ENCODE measurements at regions of chr12 and their contacts with region 1.

Region 1: DNA sequence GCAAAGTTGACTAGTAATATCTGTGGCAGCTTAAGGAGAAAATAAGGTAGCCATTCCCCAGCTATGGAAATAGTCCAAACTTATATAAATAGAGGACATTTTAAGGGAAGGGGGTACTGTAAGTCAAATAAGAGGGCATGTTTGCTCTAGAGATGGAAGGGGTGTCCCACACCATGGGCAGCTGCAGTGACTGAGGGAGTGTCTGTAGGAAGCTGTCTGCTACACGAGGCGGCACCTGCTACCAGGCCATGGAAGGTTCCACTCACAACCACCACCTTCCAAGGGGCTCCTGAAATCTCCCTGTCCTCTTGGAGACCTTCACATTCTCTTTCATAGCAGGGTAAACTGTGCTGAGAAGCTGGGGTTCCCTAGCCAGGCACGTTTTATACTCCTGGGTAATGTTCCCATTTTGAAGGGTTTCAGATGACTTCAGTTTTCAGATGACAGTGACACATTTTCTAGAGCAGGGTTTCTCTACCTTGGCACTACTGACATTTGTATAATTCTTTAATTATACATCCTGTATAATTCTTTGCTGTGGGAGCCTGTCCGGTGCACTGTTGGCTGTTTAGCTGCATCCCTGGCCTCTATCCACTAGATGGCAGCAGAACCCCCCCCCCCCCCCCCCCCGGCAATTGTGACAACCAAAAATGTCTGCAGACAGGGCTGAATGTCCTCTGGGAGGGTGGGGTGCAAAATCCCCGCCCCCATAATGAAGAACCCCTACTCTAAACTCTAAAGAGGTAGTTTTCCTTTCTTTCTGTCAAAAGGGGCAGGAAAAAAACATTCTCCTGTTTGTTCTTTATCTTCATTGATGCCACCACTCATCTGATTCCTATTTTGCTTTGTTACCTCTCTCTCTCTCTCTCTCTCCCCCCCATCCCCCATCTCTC is 11.6 kb upstream of the SMCO2 start:
- DNase-seq: no peak
- ATAC-seq: peak; percentile 74
- H3K4me3 ChIP-seq: no peak overlapping the region
- H3K27ac ChIP-seq: no peak overlapping the region
- H3K4me1 ChIP-seq: peaks cover 16% of the 10 kb centered on the region
- H3K27me3 ChIP-seq: no peaks in the 10 kb centered on the region
- CTCF ChIP-seq: peak; percentile 46 to 65 (median 51); a peak in 5 of 6 replicates
- EP300 ChIP-seq: no peak
- POLR2A ChIP-seq: no peak
- RAD21 ChIP-seq: peak; percentile 50

Region 2: DNA sequence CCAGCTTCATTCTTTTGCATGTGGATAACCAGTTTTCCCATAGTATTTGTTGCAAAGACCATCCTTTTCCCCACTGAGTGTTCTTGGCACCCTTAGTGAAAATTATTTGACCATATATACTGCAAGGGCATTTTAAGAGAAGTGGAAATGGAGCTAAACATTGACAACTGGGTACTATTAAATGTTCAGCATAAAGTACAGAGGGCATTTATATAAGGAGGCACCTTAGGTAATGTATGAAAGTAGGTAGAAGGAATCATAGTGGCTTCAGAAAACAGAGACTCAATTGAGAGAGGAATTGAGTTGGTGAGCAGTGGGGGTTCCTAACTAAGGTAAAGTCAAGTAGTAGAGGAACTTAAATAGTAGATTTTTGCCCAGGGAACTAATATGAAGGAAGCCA is 22.9 kb before region 1 on chr12:
- CTCF ChIA-PET with region 1: interaction called, 14 read pairs
- POLR2A ChIA-PET with region 1: no interaction called
- RAD21 ChIA-PET with region 1: no interaction called
- SMC1A ChIA-PET with region 1: interaction called, 5 read pairs
- in situ Hi-C with region 1: no loop called
- intact Hi-C with region 1: no loop called
- DNase-seq: no peak
- ATAC-seq: no peak
- H3K4me3 ChIP-seq: no peak overlapping the region
- H3K27ac ChIP-seq: no peak overlapping the region
- H3K4me1 ChIP-seq: no peaks in the 10 kb centered on the region
- H3K27me3 ChIP-seq: no peaks in the 10 kb centered on the region
- CTCF ChIP-seq: no peak
- EP300 ChIP-seq: no peak
- POLR2A ChIP-seq: no peak
- RAD21 ChIP-seq: no peak

Region 3: DNA sequence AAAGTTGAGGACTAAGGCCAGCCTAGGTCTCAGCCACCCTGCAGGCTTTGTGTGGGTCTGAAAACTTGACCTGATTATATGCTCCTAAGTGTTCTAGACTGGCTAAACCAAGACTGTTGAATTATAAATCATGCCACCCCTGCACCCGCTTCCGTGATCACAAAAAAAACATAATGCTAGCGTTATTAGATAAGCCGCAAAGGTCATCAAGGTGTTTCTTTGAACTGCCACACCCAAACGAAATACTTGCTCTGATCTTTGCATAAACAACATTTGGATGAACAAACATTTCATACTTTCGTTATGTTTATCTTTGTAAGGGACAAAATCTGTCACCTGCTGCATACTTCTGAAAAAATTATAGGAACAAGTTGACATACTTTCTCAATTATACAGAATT is 14.1 kb after region 1 on chr12:
- CTCF ChIA-PET with region 1: interaction called, 10 read pairs
- POLR2A ChIA-PET with region 1: no interaction called
- RAD21 ChIA-PET with region 1: no interaction called
- SMC1A ChIA-PET with region 1: no interaction called
- in situ Hi-C with region 1: no loop called
- intact Hi-C with region 1: no loop called
- DNase-seq: no peak
- ATAC-seq: no peak
- H3K4me3 ChIP-seq: no peak overlapping the region
- H3K27ac ChIP-seq: no peak overlapping the region
- H3K4me1 ChIP-seq: no peaks in the 10 kb centered on the region
- H3K27me3 ChIP-seq: no peaks in the 10 kb centered on the region; a peak in 1 of 4 replicates
- CTCF ChIP-seq: no peak
- EP300 ChIP-seq: no peak
- POLR2A ChIP-seq: no peak
- RAD21 ChIP-seq: no peak

Region 4: GRCh38 chr12:27498149-27498548 is 63.2 kb after region 1 on chr12:
- CTCF ChIA-PET with region 1: no interaction called
- POLR2A ChIA-PET with region 1: no interaction called
- RAD21 ChIA-PET with region 1: no interaction called
- SMC1A ChIA-PET with region 1: no interaction called
- in situ Hi-C with region 1: no loop called
- intact Hi-C with region 1: no loop called
- DNase-seq: peak; percentile 28
- ATAC-seq: peak; percentile 94
- H3K4me3 ChIP-seq: no peak overlapping the region
- H3K27ac ChIP-seq: no peak overlapping the region
- H3K4me1 ChIP-seq: no peaks in the 10 kb centered on the region
- H3K27me3 ChIP-seq: no peaks in the 10 kb centered on the region; a peak in 1 of 4 replicates
- CTCF ChIP-seq: no peak
- EP300 ChIP-seq: no peak
- POLR2A ChIP-seq: no peak
- RAD21 ChIP-seq: 0 out of 2 replicates have a peak, but pooled peaks have one; percentile 1

Region 5: GRCh38 chr12:27534060-27534764 is 99.3 kb after region 1 on chr12:
- CTCF ChIA-PET with region 1: interaction called, 10 read pairs
- POLR2A ChIA-PET with region 1: no interaction called
- RAD21 ChIA-PET with region 1: no interaction called
- SMC1A ChIA-PET with region 1: no interaction called
- in situ Hi-C with region 1: no loop called
- intact Hi-C with region 1: no loop called
- DNase-seq: peak; percentile 86
- ATAC-seq: peak; percentile 77
- H3K4me3 ChIP-seq: peak overlapping the region; percentile 27; the same call in 1 of the 2 replicates
- H3K27ac ChIP-seq: peak overlapping the region; percentile 78
- H3K4me1 ChIP-seq: peaks cover 62% of the 10 kb centered on the region
- H3K27me3 ChIP-seq: no peaks in the 10 kb centered on the region
- CTCF ChIP-seq: no peak
- EP300 ChIP-seq: no peak
- POLR2A ChIP-seq: no peak
- RAD21 ChIP-seq: peak; percentile 9; the same call in 1 of the 2 replicates

Region 6: GRCh38 chr12:27652174-27652763 is 217.3 kb after region 1 on chr12:
- CTCF ChIA-PET with region 1: interaction called, 23 read pairs
- POLR2A ChIA-PET with region 1: no interaction called
- RAD21 ChIA-PET with region 1: interaction called, 10 read pairs
- SMC1A ChIA-PET with region 1: interaction called, 16 read pairs
- in situ Hi-C with region 1: loop called (anchors 25 kb)
- intact Hi-C with region 1: loop called (anchors 1 kb)
- DNase-seq: peak; percentile 8
- ATAC-seq: peak; percentile 71
- H3K4me3 ChIP-seq: no peak overlapping the region
- H3K27ac ChIP-seq: no peak overlapping the region
- H3K4me1 ChIP-seq: peaks cover 5% of the 10 kb centered on the region; the same call in 1 of the 2 replicates
- H3K27me3 ChIP-seq: no peaks in the 10 kb centered on the region
- CTCF ChIP-seq: peak; percentile 77 to 81 (median 80)
- EP300 ChIP-seq: no peak
- POLR2A ChIP-seq: no peak
- RAD21 ChIP-seq: peak; percentile 90

Region 7: GRCh38 chr12:28535216-28535615 is 1100.3 kb after region 1 on chr12:
- CTCF ChIA-PET with region 1: no interaction called
- POLR2A ChIA-PET with region 1: no interaction called
- RAD21 ChIA-PET with region 1: no interaction called
- SMC1A ChIA-PET with region 1: no interaction called
- in situ Hi-C with region 1: no loop called
- intact Hi-C with region 1: no loop called
- DNase-seq: no peak
- ATAC-seq: no peak
- H3K4me3 ChIP-seq: no peak overlapping the region
- H3K27ac ChIP-seq: no peak overlapping the region
- H3K4me1 ChIP-seq: no peaks in the 10 kb centered on the region
- H3K27me3 ChIP-seq: no peaks in the 10 kb centered on the region
- CTCF ChIP-seq: no peak
- EP300 ChIP-seq: no peak
- POLR2A ChIP-seq: no peak
- RAD21 ChIP-seq: no peak

Measured in GM12878 (cell line).